Ovary (tissue), 10 donors: ENCODE measurements at regions of chr19 and their contacts with region 1.

Region 1: GRCh38 chr19:49590071-49590970 is 661 bp upstream of the PRR12 start:
- DNase-seq: peak; percentile 90 to 93 (median 91)
- H3K4me3 ChIP-seq: peak overlapping the region; percentile 74
- H3K27ac ChIP-seq: peak overlapping the region; percentile 20 to 75
- H3K4me1 ChIP-seq: peaks cover 3% of the 10 kb centered on the region
- H3K27me3 ChIP-seq: no peaks in the 10 kb centered on the region
- CTCF ChIP-seq: peak in 1 of 3 donors; percentile 9
- EP300 ChIP-seq: no peak
- POLR2A ChIP-seq: no peak

Region 2: GRCh38 chr19:47729992-47730889 is 1860.1 kb before region 1 on chr19:
- intact Hi-C with region 1: loop called in 1 of 4 experiments (anchors 10 kb)
- DNase-seq: peak; percentile 66 to 84 (median 75)
- H3K4me3 ChIP-seq: peak overlapping the region; percentile 23
- H3K27ac ChIP-seq: peak overlapping the region; percentile 82 to 93
- H3K4me1 ChIP-seq: peaks cover 14% of the 10 kb centered on the region
- H3K27me3 ChIP-seq: no peaks in the 10 kb centered on the region
- CTCF ChIP-seq: no peak
- EP300 ChIP-seq: no peak
- POLR2A ChIP-seq: no peak

Region 3: GRCh38 chr19:49555600-49556411 is 34.5 kb before region 1 on chr19:
- intact Hi-C with region 1: no loop called
- DNase-seq: peak; percentile 62 to 82 (median 78)
- H3K4me3 ChIP-seq: no peak overlapping the region
- H3K27ac ChIP-seq: peak overlapping the region in 1 of 2 donors; percentile 16
- H3K4me1 ChIP-seq: peaks cover 2% of the 10 kb centered on the region
- H3K27me3 ChIP-seq: no peaks in the 10 kb centered on the region
- CTCF ChIP-seq: no peak
- EP300 ChIP-seq: no peak
- POLR2A ChIP-seq: no peak

Region 4: GRCh38 chr19:49640113-49640898 is 50.0 kb after region 1 on chr19 and contains the start of gene RRAS:
- intact Hi-C with region 1: loop called in 2 of 4 experiments (anchors 2 to 5 kb)
- DNase-seq: peak; percentile 98 to 100 (median 99)
- H3K4me3 ChIP-seq: peak within 1 kb of the TSS; percentile 80
- H3K27ac ChIP-seq: peak within 1 kb of the TSS; percentile 98 to 100
- H3K4me1 ChIP-seq: peaks cover 12% of the 10 kb centered on the region
- H3K27me3 ChIP-seq: no peaks in the 10 kb centered on the region
- CTCF ChIP-seq: no peak
- EP300 ChIP-seq: peak; percentile 81
- POLR2A ChIP-seq: peak; percentile 97
- total RNA-seq, gene RRAS: 28.7 to 62.8 (median 37.6) TPM

Region 5: GRCh38 chr19:50500060-50500752 is 909.9 kb after region 1 on chr19:
- intact Hi-C with region 1: no loop called
- DNase-seq: no peak
- H3K4me3 ChIP-seq: no peak overlapping the region
- H3K27ac ChIP-seq: no peak overlapping the region
- H3K4me1 ChIP-seq: no peaks in the 10 kb centered on the region
- H3K27me3 ChIP-seq: no peaks in the 10 kb centered on the region
- CTCF ChIP-seq: no peak
- EP300 ChIP-seq: no peak
- POLR2A ChIP-seq: no peak

Region 6: DNA sequence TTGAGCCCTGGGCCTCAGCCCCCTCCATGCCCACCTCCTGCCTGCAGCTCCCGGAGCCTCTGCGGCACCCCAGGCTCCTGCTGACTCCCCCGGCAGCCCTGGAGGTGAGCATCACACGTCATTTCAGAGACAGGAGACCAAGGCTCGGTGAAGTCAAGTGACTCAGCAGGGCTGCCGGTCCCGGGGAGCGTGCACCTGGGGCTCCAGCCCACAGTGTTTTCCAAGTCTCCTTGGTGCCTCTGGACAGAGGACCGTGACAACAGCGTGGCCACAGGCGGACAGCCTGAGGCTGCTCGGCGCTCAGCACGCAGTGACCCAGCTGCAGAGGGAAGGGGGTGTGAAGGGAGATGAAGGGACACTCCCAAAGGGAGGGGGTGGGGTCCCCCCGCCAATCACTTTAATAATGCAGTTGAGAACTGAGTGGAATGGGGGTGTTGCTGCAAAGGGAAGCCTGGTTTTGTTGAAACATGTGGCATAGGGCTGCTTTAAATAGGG is 940.8 kb after region 1 on chr19:
- intact Hi-C with region 1: no loop called
- DNase-seq: no peak
- H3K4me3 ChIP-seq: no peak overlapping the region
- H3K27ac ChIP-seq: no peak overlapping the region
- H3K4me1 ChIP-seq: no peaks in the 10 kb centered on the region
- H3K27me3 ChIP-seq: no peaks in the 10 kb centered on the region
- CTCF ChIP-seq: no peak
- EP300 ChIP-seq: no peak
- POLR2A ChIP-seq: no peak